MCF 10A (cell line): ENCODE measurements at regions of chr14 and their contacts with region 1.

Region 1: GRCh38 chr14:32382704-32383103 is 53.6 kb downstream of the AKAP6 start:
- DNase-seq: peak; percentile 38
- H3K4me3 Mint-ChIP-seq: no peak overlapping the region
- H3K27ac Mint-ChIP-seq: no peak overlapping the region
- H3K4me1 Mint-ChIP-seq: peaks cover 27% of the 10 kb centered on the region
- H3K27me3 Mint-ChIP-seq: no peaks in the 10 kb centered on the region
- CTCF ChIP-seq: peak; percentile 75

Region 2: DNA sequence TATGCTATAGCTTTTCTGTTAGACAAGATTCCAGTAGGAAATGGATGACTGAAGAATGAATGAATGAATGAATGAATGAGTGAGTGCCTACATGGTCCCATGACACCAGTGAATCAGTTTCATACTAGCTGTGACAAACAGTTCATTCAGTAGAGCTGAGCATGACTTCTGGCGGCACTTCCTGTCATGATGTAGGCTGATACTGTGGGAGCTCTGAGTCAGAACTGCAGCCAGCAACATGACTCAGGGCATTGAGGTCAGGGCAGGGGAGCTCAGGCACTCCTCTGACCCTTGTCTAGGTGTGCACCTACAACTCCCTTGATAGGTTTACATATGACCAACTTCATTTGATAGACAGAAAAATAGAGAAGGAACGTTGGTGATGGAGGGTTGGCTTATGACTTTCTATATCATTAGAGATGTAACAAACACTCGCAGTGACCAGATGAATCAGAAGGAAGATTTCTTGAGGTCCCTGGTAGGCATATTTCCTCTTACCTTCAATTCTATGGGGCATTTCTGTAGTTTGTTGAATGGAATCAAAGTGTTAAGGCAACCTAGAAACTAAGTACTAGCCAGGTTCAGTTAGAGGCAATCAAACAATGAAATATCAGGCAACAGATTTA is 444.9 kb before region 1 on chr14:
- CTCF ChIA-PET with region 1: interaction called, 5 read pairs
- POLR2A ChIA-PET with region 1: no interaction called
- intact Hi-C with region 1: loop called (anchors 1 kb)
- DNase-seq: peak; percentile 87
- H3K4me3 Mint-ChIP-seq: no peak overlapping the region
- H3K27ac Mint-ChIP-seq: peak overlapping the region; percentile 83
- H3K4me1 Mint-ChIP-seq: peaks cover 28% of the 10 kb centered on the region
- H3K27me3 Mint-ChIP-seq: no peaks in the 10 kb centered on the region
- CTCF ChIP-seq: no peak

Region 3: GRCh38 chr14:32259368-32260013 is 123.2 kb before region 1 on chr14:
- CTCF ChIA-PET with region 1: interaction called, 13 read pairs
- POLR2A ChIA-PET with region 1: interaction called, 3 read pairs
- intact Hi-C with region 1: loop called (anchors 1 kb)
- DNase-seq: peak; percentile 73
- H3K4me3 Mint-ChIP-seq: no peak overlapping the region
- H3K27ac Mint-ChIP-seq: peak overlapping the region; percentile 14
- H3K4me1 Mint-ChIP-seq: peaks cover 11% of the 10 kb centered on the region
- H3K27me3 Mint-ChIP-seq: no peaks in the 10 kb centered on the region
- CTCF ChIP-seq: no peak

Region 4: GRCh38 chr14:32469388-32470160 is 86.9 kb after region 1 on chr14:
- CTCF ChIA-PET with region 1: interaction called, 3 read pairs
- POLR2A ChIA-PET with region 1: no interaction called
- intact Hi-C with region 1: loop called (anchors 1 kb)
- DNase-seq: peak; percentile 50
- H3K4me3 Mint-ChIP-seq: no peak overlapping the region
- H3K27ac Mint-ChIP-seq: peak overlapping the region; percentile 76
- H3K4me1 Mint-ChIP-seq: peaks cover 47% of the 10 kb centered on the region
- H3K27me3 Mint-ChIP-seq: no peaks in the 10 kb centered on the region
- CTCF ChIP-seq: peak; percentile 45

Region 5: GRCh38 chr14:32480337-32480736 is 97.6 kb after region 1 on chr14:
- CTCF ChIA-PET with region 1: no interaction called
- POLR2A ChIA-PET with region 1: no interaction called
- intact Hi-C with region 1: no loop called
- DNase-seq: no peak
- H3K4me3 Mint-ChIP-seq: no peak overlapping the region
- H3K27ac Mint-ChIP-seq: no peak overlapping the region
- H3K4me1 Mint-ChIP-seq: peaks cover 11% of the 10 kb centered on the region
- H3K27me3 Mint-ChIP-seq: no peaks in the 10 kb centered on the region
- CTCF ChIP-seq: no peak

Region 6: DNA sequence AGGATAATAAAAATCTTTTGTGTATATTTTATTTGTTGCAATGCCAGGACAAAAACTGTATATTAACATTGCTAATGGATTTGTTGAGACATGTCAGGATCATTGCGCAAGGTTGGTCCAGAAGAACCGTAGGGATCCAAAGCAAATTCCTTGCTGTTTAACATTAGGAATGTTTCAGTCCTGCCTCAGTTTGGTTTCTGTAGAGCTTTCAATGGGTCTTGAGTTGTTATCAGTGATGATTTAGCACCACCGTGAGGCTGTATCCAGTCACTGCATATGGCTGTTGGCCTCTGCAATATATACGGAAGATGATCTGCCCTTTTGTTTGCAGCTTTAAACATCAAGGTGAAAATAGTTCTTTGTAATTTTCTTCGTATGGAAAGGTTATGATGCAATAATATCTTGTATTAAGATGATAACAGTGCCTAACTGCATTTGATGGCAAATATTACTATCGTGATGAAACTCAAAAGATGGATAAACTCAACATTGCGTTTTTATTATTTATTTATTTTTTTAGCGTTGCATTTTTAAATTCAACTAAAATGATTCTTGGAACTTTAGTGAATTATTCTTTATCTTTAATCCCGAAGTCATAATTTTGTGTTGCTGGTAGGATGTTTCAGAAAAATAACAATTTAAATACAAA is 177.6 kb after region 1 on chr14:
- CTCF ChIA-PET with region 1: interaction called, 4 read pairs
- POLR2A ChIA-PET with region 1: no interaction called
- intact Hi-C with region 1: loop called (anchors 2 kb)
- DNase-seq: peak; percentile 85
- H3K4me3 Mint-ChIP-seq: no peak overlapping the region
- H3K27ac Mint-ChIP-seq: no peak overlapping the region
- H3K4me1 Mint-ChIP-seq: peaks cover 10% of the 10 kb centered on the region
- H3K27me3 Mint-ChIP-seq: no peaks in the 10 kb centered on the region
- CTCF ChIP-seq: peak; percentile 77